PC-9 (cell line): ENCODE measurements at regions of chr7 and their contacts with region 1.

Region 1: GRCh38 chr7:5374464-5374863 is 49.2 kb downstream of the TNRC18 start:
- DNase-seq: no peak
- H3K4me3 ChIP-seq: no peak overlapping the region
- H3K27ac ChIP-seq: no peak overlapping the region
- H3K4me1 ChIP-seq: no peaks in the 10 kb centered on the region
- H3K27me3 ChIP-seq: no peaks in the 10 kb centered on the region
- CTCF ChIP-seq: no peak

Region 2: GRCh38 chr7:5333121-5334045 is 41.1 kb before region 1 on chr7:
- CTCF ChIA-PET with region 1: no interaction called
- POLR2A ChIA-PET with region 1: interaction called, 13 read pairs
- intact Hi-C with region 1: no loop called
- DNase-seq: no peak
- H3K4me3 ChIP-seq: no peak overlapping the region
- H3K27ac ChIP-seq: no peak overlapping the region
- H3K4me1 ChIP-seq: no peaks in the 10 kb centered on the region
- H3K27me3 ChIP-seq: no peaks in the 10 kb centered on the region
- CTCF ChIP-seq: no peak

Region 3: DNA sequence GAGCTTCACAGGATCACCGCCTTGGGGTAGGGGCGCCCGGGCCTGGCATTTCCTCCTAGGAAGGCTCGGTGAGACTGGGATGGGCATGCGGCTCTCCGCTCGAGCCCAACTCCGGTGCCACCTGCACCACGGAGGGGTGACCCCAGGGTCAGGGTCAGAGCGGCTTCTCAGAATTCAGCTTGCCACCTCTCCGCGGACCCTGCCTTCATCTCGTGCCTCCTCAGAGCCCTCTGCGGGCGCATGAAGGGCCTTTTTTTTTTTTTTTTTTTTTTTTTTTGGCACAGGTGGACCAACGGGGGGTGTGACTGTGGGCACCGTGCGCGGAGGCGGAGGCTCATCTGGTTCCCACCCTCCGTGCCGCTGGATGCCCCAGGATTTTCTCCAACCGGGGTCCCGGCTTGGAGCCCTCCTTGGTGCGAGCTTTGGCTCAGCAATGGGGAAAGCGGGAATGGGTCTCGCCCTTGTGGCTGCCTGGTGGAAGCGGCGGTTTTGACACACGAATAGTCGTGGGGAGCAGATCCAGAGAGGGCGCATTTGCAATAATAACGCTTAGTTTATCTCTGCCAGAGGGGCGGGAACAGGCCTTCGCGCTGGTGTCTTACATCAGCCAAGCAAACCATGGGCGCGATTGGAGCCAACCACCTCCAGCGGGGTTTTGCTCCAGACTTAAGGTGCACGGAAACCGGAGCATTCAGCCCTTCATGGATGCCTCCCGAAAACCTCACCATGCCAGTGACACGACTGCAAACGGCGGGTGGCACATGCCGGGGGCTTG is 54.2 kb after region 1 on chr7:
- CTCF ChIA-PET with region 1: no interaction called
- POLR2A ChIA-PET with region 1: no interaction called
- intact Hi-C with region 1: no loop called
- DNase-seq: peak; percentile 69 to 77
- H3K4me3 ChIP-seq: peak overlapping the region; percentile 96
- H3K27ac ChIP-seq: peak overlapping the region; percentile 94
- H3K4me1 ChIP-seq: peaks cover 7% of the 10 kb centered on the region; the same call in 1 of the 2 replicates
- H3K27me3 ChIP-seq: no peaks in the 10 kb centered on the region
- CTCF ChIP-seq: no peak; the same call in 1 of the 2 replicates